Body of pancreas (tissue), 4 donors: ENCODE measurements at regions of chr20 and their contacts with region 1.

Region 1: GRCh38 chr20:24851346-24852019 is 97.6 kb upstream of the CST7 start:
- DNase-seq: no peak
- ATAC-seq: no peak
- H3K4me3 ChIP-seq: no peak overlapping the region
- H3K27ac ChIP-seq: no peak overlapping the region
- H3K4me1 ChIP-seq: no peaks in the 10 kb centered on the region
- H3K27me3 ChIP-seq: no peaks in the 10 kb centered on the region
- CTCF ChIP-seq: no peak
- POLR2A ChIP-seq: no peak

Region 2: GRCh38 chr20:24808616-24809015 is 42.9 kb before region 1 on chr20:
- intact Hi-C with region 1: loop called (anchors 10 kb)
- DNase-seq: no peak
- ATAC-seq: no peak
- H3K4me3 ChIP-seq: no peak overlapping the region
- H3K27ac ChIP-seq: no peak overlapping the region
- H3K4me1 ChIP-seq: no peaks in the 10 kb centered on the region
- H3K27me3 ChIP-seq: no peaks in the 10 kb centered on the region
- CTCF ChIP-seq: no peak
- POLR2A ChIP-seq: no peak

Region 3: GRCh38 chr20:25042531-25043498 is 191.3 kb after region 1 on chr20:
- intact Hi-C with region 1: no loop called
- DNase-seq: peak in 3 of 4 donors; percentile 45 to 70 (median 53)
- ATAC-seq: no peak
- H3K4me3 ChIP-seq: no peak overlapping the region
- H3K27ac ChIP-seq: peak overlapping the region; percentile 28 to 85 (median 83)
- H3K4me1 ChIP-seq: peaks cover 99% of the 10 kb centered on the region
- H3K27me3 ChIP-seq: no peaks in the 10 kb centered on the region
- CTCF ChIP-seq: no peak
- POLR2A ChIP-seq: no peak

Region 4: GRCh38 chr20:25100914-25101313 is 249.4 kb after region 1 on chr20:
- intact Hi-C with region 1: no loop called
- DNase-seq: no peak
- ATAC-seq: no peak
- H3K4me3 ChIP-seq: no peak overlapping the region
- H3K27ac ChIP-seq: no peak overlapping the region
- H3K4me1 ChIP-seq: no peaks in the 10 kb centered on the region
- H3K27me3 ChIP-seq: no peaks in the 10 kb centered on the region
- CTCF ChIP-seq: no peak
- POLR2A ChIP-seq: no peak